CD8-positive, alpha-beta T cell (primary cell): ENCODE measurements at regions of chr12 and their contacts with region 1.

Region 1: GRCh38 chr12:79200218-79200617 is 335.6 kb downstream of the SYT1 start:
- DNase-seq: no peak
- ATAC-seq: no peak
- H3K4me3 ChIP-seq: no peak overlapping the region
- H3K4me3 Mint-ChIP-seq: no peak overlapping the region
- H3K27ac ChIP-seq: no peak overlapping the region
- H3K27ac Mint-ChIP-seq: no peak overlapping the region
- H3K4me1 ChIP-seq: no peaks in the 10 kb centered on the region
- H3K4me1 Mint-ChIP-seq: no peaks in the 10 kb centered on the region
- H3K27me3 ChIP-seq: no peaks in the 10 kb centered on the region
- H3K27me3 Mint-ChIP-seq: no peaks in the 10 kb centered on the region
- CTCF ChIP-seq: no peak

Region 2: GRCh38 chr12:78081590-78082314 is 1118.5 kb before region 1 on chr12:
- CTCF ChIA-PET with region 1: no interaction called
- POLR2A ChIA-PET with region 1: no interaction called
- intact Hi-C with region 1: loop called in 1 of 2 experiments (anchors 5 kb)
- DNase-seq: no peak
- ATAC-seq: no peak
- H3K4me3 ChIP-seq: no peak overlapping the region
- H3K4me3 Mint-ChIP-seq: no peak overlapping the region
- H3K27ac ChIP-seq: no peak overlapping the region
- H3K27ac Mint-ChIP-seq: no peak overlapping the region
- H3K4me1 ChIP-seq: no peaks in the 10 kb centered on the region
- H3K4me1 Mint-ChIP-seq: no peaks in the 10 kb centered on the region
- H3K27me3 ChIP-seq: no peaks in the 10 kb centered on the region
- H3K27me3 Mint-ChIP-seq: no peaks in the 10 kb centered on the region
- CTCF ChIP-seq: no peak

Region 3: GRCh38 chr12:79162949-79163348 is 37.3 kb before region 1 on chr12:
- CTCF ChIA-PET with region 1: no interaction called
- POLR2A ChIA-PET with region 1: no interaction called
- intact Hi-C with region 1: loop called in 1 of 2 experiments (anchors 1 kb)
- DNase-seq: no peak
- ATAC-seq: no peak
- H3K4me3 ChIP-seq: no peak overlapping the region
- H3K4me3 Mint-ChIP-seq: no peak overlapping the region
- H3K27ac ChIP-seq: no peak overlapping the region
- H3K27ac Mint-ChIP-seq: no peak overlapping the region
- H3K4me1 ChIP-seq: no peaks in the 10 kb centered on the region
- H3K4me1 Mint-ChIP-seq: no peaks in the 10 kb centered on the region
- H3K27me3 ChIP-seq: no peaks in the 10 kb centered on the region
- H3K27me3 Mint-ChIP-seq: no peaks in the 10 kb centered on the region
- CTCF ChIP-seq: no peak

Region 4: GRCh38 chr12:79252358-79253075 is 52.3 kb after region 1 on chr12:
- CTCF ChIA-PET with region 1: no interaction called
- POLR2A ChIA-PET with region 1: no interaction called
- intact Hi-C with region 1: no loop called
- DNase-seq: no peak
- ATAC-seq: no peak
- H3K4me3 ChIP-seq: no peak overlapping the region
- H3K4me3 Mint-ChIP-seq: no peak overlapping the region
- H3K27ac ChIP-seq: no peak overlapping the region
- H3K27ac Mint-ChIP-seq: no peak overlapping the region
- H3K4me1 ChIP-seq: no peaks in the 10 kb centered on the region
- H3K4me1 Mint-ChIP-seq: no peaks in the 10 kb centered on the region
- H3K27me3 ChIP-seq: no peaks in the 10 kb centered on the region
- H3K27me3 Mint-ChIP-seq: no peaks in the 10 kb centered on the region
- CTCF ChIP-seq: no peak